Heart left ventricle (tissue), 16 donors: ENCODE measurements at regions of chr7 and their contacts with region 1.

Region 1: GRCh38 chr7:130896898-130897514 is 163.0 kb upstream of the KLF14 start:
- DNase-seq: peak; percentile 72 to 85 (median 79)
- ATAC-seq: peak; percentile 41 to 66 (median 58)
- H3K4me3 ChIP-seq: no peak overlapping the region
- H3K27ac ChIP-seq: peak overlapping the region in 8 of 12 donors; percentile 30 to 81 (median 43)
- H3K4me1 ChIP-seq: peaks cover 7 to 88% (median 54%) of the 10 kb centered on the region in 12 donors
- H3K27me3 ChIP-seq: no peaks in the 10 kb centered on the region
- CTCF ChIP-seq: peak; percentile 70 to 90 (median 85)
- POLR2A ChIP-seq: no peak

Region 2: GRCh38 chr7:130996841-130997231 is 99.8 kb after region 1 on chr7:
- intact Hi-C with region 1: loop called in 3 of 10 experiments (anchors 5 to 10 kb)
- DNase-seq: no peak
- ATAC-seq: peak in 3 of 4 donors; percentile 47 to 67 (median 48)
- H3K4me3 ChIP-seq: peak overlapping the region in 1 of 12 donors; percentile 18
- H3K27ac ChIP-seq: peak overlapping the region; percentile 24 to 76 (median 46)
- H3K4me1 ChIP-seq: peaks cover 22 to 89% (median 65%) of the 10 kb centered on the region in 12 donors
- H3K27me3 ChIP-seq: no peaks in the 10 kb centered on the region
- CTCF ChIP-seq: no peak
- POLR2A ChIP-seq: no peak

Region 3: GRCh38 chr7:131007394-131008330 is 110.7 kb after region 1 on chr7:
- intact Hi-C with region 1: loop called in 9 of 10 experiments (anchors 1 to 10 kb)
- DNase-seq: peak in 4 of 5 donors; percentile 49 to 61 (median 58)
- ATAC-seq: peak; percentile 24 to 74 (median 74)
- H3K4me3 ChIP-seq: no peak overlapping the region
- H3K27ac ChIP-seq: peak overlapping the region in 10 of 12 donors; percentile 4 to 77 (median 42)
- H3K4me1 ChIP-seq: peaks cover 10 to 72% (median 49%) of the 10 kb centered on the region in 12 donors
- H3K27me3 ChIP-seq: no peaks in the 10 kb centered on the region
- CTCF ChIP-seq: peak; percentile 21 to 68 (median 54)
- POLR2A ChIP-seq: no peak

Region 4: GRCh38 chr7:131040467-131040932 is 143.5 kb after region 1 on chr7:
- intact Hi-C with region 1: loop called (anchors 2 to 5 kb)
- DNase-seq: peak in 2 of 5 donors; percentile 53 to 56
- ATAC-seq: peak; percentile 16 to 78 (median 68)
- H3K4me3 ChIP-seq: peak overlapping the region in 1 of 12 donors; percentile 0
- H3K27ac ChIP-seq: peak overlapping the region in 9 of 12 donors; percentile 6 to 72 (median 42)
- H3K4me1 ChIP-seq: peaks cover 8 to 61% (median 37%) of the 10 kb centered on the region in 12 donors
- H3K27me3 ChIP-seq: no peaks in the 10 kb centered on the region
- CTCF ChIP-seq: peak; percentile 82 to 97 (median 90)
- POLR2A ChIP-seq: no peak

Region 5: GRCh38 chr7:131235489-131236317 is 338.7 kb after region 1 on chr7:
- intact Hi-C with region 1: no loop called
- DNase-seq: peak in 2 of 5 donors; percentile 43 to 60
- ATAC-seq: peak; percentile 25 to 76 (median 69)
- H3K4me3 ChIP-seq: no peak overlapping the region
- H3K27ac ChIP-seq: peak overlapping the region in 6 of 12 donors; percentile 15 to 65 (median 34)
- H3K4me1 ChIP-seq: peaks cover 0 to 47% (median 17%) of the 10 kb centered on the region in 12 donors
- H3K27me3 ChIP-seq: no peaks in the 10 kb centered on the region
- CTCF ChIP-seq: no peak
- POLR2A ChIP-seq: no peak

Region 6: DNA sequence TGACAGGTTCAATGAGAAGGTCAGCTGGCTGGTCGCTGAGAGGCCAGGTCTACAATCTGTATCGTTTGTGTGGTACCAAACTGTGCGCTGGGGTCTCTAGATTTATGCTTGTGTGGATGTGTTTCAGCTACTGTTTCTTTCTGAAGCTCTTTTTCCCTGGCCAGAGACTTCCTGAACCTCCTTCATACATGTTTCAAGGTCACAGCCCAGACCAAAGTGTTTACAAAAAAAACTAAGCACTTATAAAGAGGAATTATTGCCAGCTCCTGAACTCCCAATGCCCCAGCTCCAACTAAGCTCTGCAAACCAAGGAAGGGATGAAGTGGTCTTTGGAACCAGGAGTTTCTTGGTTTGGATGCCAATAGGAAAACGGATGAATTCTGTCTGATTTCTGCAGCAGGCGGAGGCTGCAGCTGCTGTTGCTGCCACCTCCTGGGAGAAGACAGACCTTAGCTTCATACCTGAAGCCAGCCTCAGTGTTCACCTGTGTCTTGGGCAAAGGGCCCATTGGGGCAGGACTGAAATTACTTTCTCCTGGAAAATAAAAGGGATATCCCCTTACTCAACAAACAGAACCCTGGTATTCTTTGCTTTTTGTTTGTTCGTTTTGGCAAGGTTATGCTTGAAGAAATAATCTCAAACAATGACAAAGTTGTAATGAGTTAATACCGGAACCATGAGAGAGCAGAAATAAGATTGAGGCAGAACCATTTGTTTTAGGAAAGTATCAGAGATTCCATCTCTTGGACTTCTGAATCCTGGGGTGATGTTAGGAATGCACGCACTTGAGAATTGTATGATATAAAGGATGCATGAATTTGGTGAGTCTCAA is 406.1 kb after region 1 on chr7:
- intact Hi-C with region 1: loop called in 4 of 10 experiments (anchors 5 to 10 kb)
- DNase-seq: no peak
- ATAC-seq: peak in 3 of 4 donors; percentile 39 to 58 (median 46)
- H3K4me3 ChIP-seq: no peak overlapping the region
- H3K27ac ChIP-seq: peak overlapping the region in 8 of 12 donors; percentile 4 to 72 (median 55)
- H3K4me1 ChIP-seq: peaks cover 0 to 41% (median 22%) of the 10 kb centered on the region in 12 donors
- H3K27me3 ChIP-seq: no peaks in the 10 kb centered on the region
- CTCF ChIP-seq: peak; percentile 34 to 70 (median 56)
- POLR2A ChIP-seq: no peak

Region 7: GRCh38 chr7:131327626-131328376 is 430.8 kb after region 1 on chr7 and contains the start of gene MKLN1:
- intact Hi-C with region 1: loop called in 2 of 10 experiments (anchors 10 kb)
- DNase-seq: peak; percentile 92 to 96 (median 94)
- ATAC-seq: peak; percentile 96 to 99 (median 99)
- H3K4me3 ChIP-seq: peak within 1 kb of the TSS; percentile 77 to 98 (median 90)
- H3K27ac ChIP-seq: peak within 1 kb of the TSS; percentile 93 to 99 (median 98)
- H3K4me1 ChIP-seq: peaks cover 0 to 44% (median 28%) of the 10 kb centered on the region in 12 donors
- H3K27me3 ChIP-seq: no peaks in the 10 kb centered on the region
- CTCF ChIP-seq: peak in 1 of 12 donors; percentile 7
- POLR2A ChIP-seq: peak; percentile 31 to 70
- total RNA-seq, gene MKLN1: 26.7 to 49.7 (median 42.7) TPM

Region 8: DNA sequence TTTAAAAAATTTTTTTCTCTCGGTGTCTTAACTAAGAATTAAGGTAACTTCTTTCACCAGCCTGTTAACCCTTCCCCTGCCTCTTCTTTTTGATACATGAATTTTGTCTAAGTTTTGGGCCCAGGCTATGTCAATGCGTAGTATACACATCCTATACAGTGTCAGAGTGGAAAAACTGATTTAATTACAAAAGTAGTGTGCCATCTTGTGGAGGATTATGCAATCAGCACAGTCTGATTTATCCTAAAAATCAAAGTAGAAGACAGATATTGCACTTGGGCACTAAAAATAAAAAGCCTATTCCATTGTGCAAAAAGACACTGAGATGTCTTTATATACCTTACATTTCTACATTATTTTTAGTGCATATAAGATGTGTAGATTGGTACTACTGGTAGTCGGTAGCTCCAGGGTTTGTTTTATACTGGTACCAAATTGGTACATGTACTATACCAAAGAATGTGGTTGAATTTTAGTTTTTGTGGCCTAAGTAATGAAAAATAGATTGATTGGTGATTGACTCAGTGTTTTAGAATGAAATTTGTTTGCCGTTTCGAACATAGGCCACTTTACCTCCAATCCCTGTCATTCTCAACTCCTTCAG is 527.3 kb after region 1 on chr7:
- intact Hi-C with region 1: loop called in 2 of 10 experiments (anchors 5 to 10 kb)
- DNase-seq: no peak
- ATAC-seq: peak; percentile 41 to 64 (median 58)
- H3K4me3 ChIP-seq: no peak overlapping the region
- H3K27ac ChIP-seq: peak overlapping the region in 1 of 12 donors; percentile 15
- H3K4me1 ChIP-seq: peaks cover 0 to 27% (median 15%) of the 10 kb centered on the region in 12 donors
- H3K27me3 ChIP-seq: no peaks in the 10 kb centered on the region
- CTCF ChIP-seq: peak; percentile 32 to 73 (median 63)
- POLR2A ChIP-seq: no peak